ENCODE measurements at regions of chr6 and their contacts with region 1.

Region 1: DNA sequence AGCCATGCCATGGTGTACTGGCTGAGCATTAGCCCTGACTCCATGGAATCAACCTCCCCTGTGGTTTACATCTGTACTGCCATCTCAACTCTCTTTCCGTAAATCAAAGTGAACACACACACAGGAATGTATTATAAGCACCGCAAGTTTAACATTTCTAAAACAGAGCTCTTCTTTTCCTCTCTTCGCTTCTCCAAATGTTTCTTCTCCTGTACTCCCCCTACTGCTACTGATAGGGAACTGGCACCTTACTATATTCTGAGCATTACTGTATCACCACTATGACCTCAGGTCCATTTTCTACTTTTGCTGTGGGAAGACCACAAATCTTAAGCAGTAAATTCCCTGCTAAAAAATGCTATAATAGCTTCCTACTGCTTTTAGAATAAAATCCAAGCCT is 101.2 kb downstream of the NUS1 start:
- H3K4me3 Mint-ChIP-seq: no peak overlapping the region
- H3K27ac Mint-ChIP-seq: no peak overlapping the region
- H3K4me1 Mint-ChIP-seq: peaks cover 5% of the 10 kb centered on the region
- H3K27me3 Mint-ChIP-seq: no peaks in the 10 kb centered on the region

Region 2: GRCh38 chr6:117674991-117675657 is 101.3 kb before region 1 on chr6 and contains the start of gene NUS1:
- intact Hi-C with region 1: loop called (anchors 10 kb)
- H3K4me3 Mint-ChIP-seq: peak within 1 kb of the TSS; percentile 86
- H3K27ac Mint-ChIP-seq: peak within 1 kb of the TSS; percentile 68
- H3K4me1 Mint-ChIP-seq: peaks cover 40% of the 10 kb centered on the region
- H3K27me3 Mint-ChIP-seq: no peaks in the 10 kb centered on the region